ENCODE measurements at regions of chr2 and their contacts with region 1.

Region 1: GRCh38 chr2:69816923-69817542 is 12.4 kb upstream of the GMCL1 start:
- DNase-seq: peak; percentile 32 to 87 (median 65)
- ATAC-seq: peak; percentile 63 to 84 (median 75)
- H3K4me3 ChIP-seq: no peak overlapping the region
- H3K4me3 Mint-ChIP-seq: no peak overlapping the region
- H3K27ac ChIP-seq: no peak overlapping the region
- H3K27ac Mint-ChIP-seq: no peak overlapping the region
- H3K4me1 ChIP-seq: peaks cover 0 to 2% of the 10 kb centered on the region in 2 experiments
- H3K4me1 Mint-ChIP-seq: peaks cover 0 to 7% (median 7%) of the 10 kb centered on the region in 3 donors
- H3K27me3 ChIP-seq: no peaks in the 10 kb centered on the region
- H3K27me3 Mint-ChIP-seq: no peaks in the 10 kb centered on the region

Region 2: DNA sequence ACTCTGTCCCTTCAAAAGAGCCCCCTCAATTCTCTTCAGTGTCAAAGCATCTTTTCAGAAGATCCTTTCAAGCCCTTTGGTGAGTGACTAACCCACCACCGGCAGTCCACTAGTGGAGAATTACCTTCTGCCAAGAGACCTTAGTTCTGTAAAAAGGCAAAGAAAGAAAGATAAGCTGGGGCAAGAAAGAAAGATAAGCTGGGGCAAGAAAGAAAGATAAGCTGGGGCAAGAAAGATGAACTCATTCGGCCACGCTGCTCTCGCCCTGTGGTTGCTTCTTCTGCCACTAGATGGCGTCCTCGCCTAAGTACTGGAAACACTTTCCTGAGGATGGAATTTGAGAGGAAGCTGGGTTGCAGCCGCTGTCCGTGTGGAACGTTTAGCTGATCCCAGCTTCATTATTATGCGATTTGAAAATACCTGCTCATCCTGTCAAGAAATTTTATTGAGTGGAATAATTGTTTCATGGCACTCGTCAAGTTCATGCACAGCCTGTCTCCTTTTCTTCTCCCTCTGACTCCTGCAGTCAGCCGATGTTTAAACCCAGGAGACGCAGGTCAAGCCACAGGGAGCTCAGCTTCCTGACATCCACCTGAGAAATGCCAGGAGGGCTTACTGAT is 92.4 kb before region 1 on chr2:
- CTCF ChIA-PET with region 1: interaction called, 52 to 191 read pairs
- POLR2A ChIA-PET with region 1: no interaction called
- DNase-seq: peak; percentile 53 to 90 (median 76)
- ATAC-seq: peak; percentile 82 to 86 (median 84)
- H3K4me3 ChIP-seq: peak overlapping the region; percentile 11 to 21
- H3K4me3 Mint-ChIP-seq: peak overlapping the region; percentile 17 to 39 (median 21)
- H3K27ac ChIP-seq: no peak overlapping the region
- H3K27ac Mint-ChIP-seq: no peak overlapping the region
- H3K4me1 ChIP-seq: peaks cover 3 to 5% of the 10 kb centered on the region in 2 experiments
- H3K4me1 Mint-ChIP-seq: peaks cover 0 to 6% (median 6%) of the 10 kb centered on the region in 3 donors
- H3K27me3 ChIP-seq: no peaks in the 10 kb centered on the region
- H3K27me3 Mint-ChIP-seq: no peaks in the 10 kb centered on the region

Region 3: GRCh38 chr2:69741619-69742466 is 75.2 kb before region 1 on chr2 and contains the start of gene ANXA4:
- CTCF ChIA-PET with region 1: interaction called in 1 of 2 experiments, 11 read pairs
- POLR2A ChIA-PET with region 1: no interaction called
- DNase-seq: peak; percentile 7 to 71 (median 35)
- ATAC-seq: peak; percentile 83 to 93 (median 90)
- H3K4me3 ChIP-seq: peak within 1 kb of the TSS; percentile 79 to 82
- H3K4me3 Mint-ChIP-seq: peak within 1 kb of the TSS; percentile 92 to 96 (median 95)
- H3K27ac ChIP-seq: no peak within 1 kb of the TSS
- H3K27ac Mint-ChIP-seq: peak within 1 kb of the TSS; percentile 89 to 90
- H3K4me1 ChIP-seq: peaks cover 2 to 15% of the 10 kb centered on the region in 2 experiments
- H3K4me1 Mint-ChIP-seq: peaks cover 12 to 30% (median 17%) of the 10 kb centered on the region in 3 donors
- H3K27me3 ChIP-seq: peaks cover 0 to 3% of the 10 kb centered on the region in 2 experiments
- H3K27me3 Mint-ChIP-seq: no peaks in the 10 kb centered on the region
- total RNA-seq, gene ANXA4: 10.4 to 27.6 (median 20.0) TPM

Region 4: GRCh38 chr2:69768235-69768634 is 48.8 kb before region 1 on chr2:
- CTCF ChIA-PET with region 1: interaction called in 1 of 2 experiments, 6 read pairs
- POLR2A ChIA-PET with region 1: interaction called, 6 to 11 read pairs
- DNase-seq: no peak
- ATAC-seq: no peak
- H3K4me3 ChIP-seq: no peak overlapping the region
- H3K4me3 Mint-ChIP-seq: no peak overlapping the region
- H3K27ac ChIP-seq: no peak overlapping the region
- H3K27ac Mint-ChIP-seq: no peak overlapping the region
- H3K4me1 ChIP-seq: peaks cover 4 to 18% of the 10 kb centered on the region in 2 experiments
- H3K4me1 Mint-ChIP-seq: peaks cover 14 to 58% (median 38%) of the 10 kb centered on the region in 3 donors
- H3K27me3 ChIP-seq: no peaks in the 10 kb centered on the region
- H3K27me3 Mint-ChIP-seq: no peaks in the 10 kb centered on the region

Region 5: DNA sequence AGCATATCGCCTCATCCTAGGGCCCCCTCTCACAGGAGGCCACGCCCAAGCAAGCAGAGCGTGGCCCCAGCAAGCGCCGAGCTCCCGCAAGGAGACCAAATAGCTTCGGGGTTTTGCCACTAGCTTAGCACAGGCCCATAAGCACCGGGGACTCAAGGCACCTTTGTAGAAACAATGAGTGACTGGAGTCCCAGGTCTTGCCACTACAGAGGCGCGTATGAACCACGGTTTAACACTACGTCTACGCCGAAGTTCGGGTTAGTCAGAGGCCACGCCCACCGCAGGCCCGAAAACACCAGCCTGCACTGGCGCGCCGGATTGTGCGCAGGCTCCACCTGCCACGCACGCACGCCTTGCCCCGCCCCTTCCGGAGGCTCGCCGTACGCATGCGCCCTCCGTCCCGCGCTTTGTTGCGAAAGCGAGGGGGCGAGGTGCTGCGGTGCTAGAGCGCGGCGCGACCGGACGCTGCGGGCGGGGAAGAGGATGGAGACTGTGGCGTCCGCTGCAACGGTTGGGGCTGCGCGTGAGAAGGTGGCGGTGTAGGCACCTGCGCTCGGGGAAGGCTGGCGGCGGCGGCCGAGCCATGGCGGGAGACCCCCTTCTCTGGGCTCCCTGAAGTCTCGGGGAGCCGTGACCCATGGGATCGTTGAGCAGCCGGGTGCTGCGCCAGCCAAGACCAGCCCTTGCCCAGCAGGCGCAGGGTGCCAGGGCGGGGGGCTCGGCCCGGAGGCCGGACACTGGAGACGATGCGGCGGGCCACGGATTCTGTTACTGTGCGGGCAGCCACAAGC is 12.4 kb after region 1 on chr2 and contains the start of gene GMCL1:
- CTCF ChIA-PET with region 1: interaction called, 3 to 19 read pairs
- POLR2A ChIA-PET with region 1: interaction called in 1 of 2 experiments, 3 read pairs
- DNase-seq: peak; percentile 95 to 100 (median 98)
- ATAC-seq: peak; percentile 92 to 96 (median 94)
- H3K4me3 ChIP-seq: peak within 1 kb of the TSS; percentile 74 to 91
- H3K4me3 Mint-ChIP-seq: peak within 1 kb of the TSS; percentile 83 to 96 (median 95)
- H3K27ac ChIP-seq: peak within 1 kb of the TSS; percentile 97
- H3K27ac Mint-ChIP-seq: peak within 1 kb of the TSS; percentile 93 to 96
- H3K4me1 ChIP-seq: peaks cover 12 to 33% of the 10 kb centered on the region in 2 experiments
- H3K4me1 Mint-ChIP-seq: peaks cover 53 to 56% (median 54%) of the 10 kb centered on the region in 3 donors
- H3K27me3 ChIP-seq: no peaks in the 10 kb centered on the region
- H3K27me3 Mint-ChIP-seq: no peaks in the 10 kb centered on the region
- total RNA-seq, gene GMCL1: 25.4 to 32.0 (median 27.8) TPM

Measured in T-cell (primary cell).